ENCODE measurements at regions of chr4 and their contacts with region 1.

Region 1: GRCh38 chr4:61741327-61742096 is 541.4 kb downstream of the ADGRL3 start:
- DNase-seq: no peak

Region 2: DNA sequence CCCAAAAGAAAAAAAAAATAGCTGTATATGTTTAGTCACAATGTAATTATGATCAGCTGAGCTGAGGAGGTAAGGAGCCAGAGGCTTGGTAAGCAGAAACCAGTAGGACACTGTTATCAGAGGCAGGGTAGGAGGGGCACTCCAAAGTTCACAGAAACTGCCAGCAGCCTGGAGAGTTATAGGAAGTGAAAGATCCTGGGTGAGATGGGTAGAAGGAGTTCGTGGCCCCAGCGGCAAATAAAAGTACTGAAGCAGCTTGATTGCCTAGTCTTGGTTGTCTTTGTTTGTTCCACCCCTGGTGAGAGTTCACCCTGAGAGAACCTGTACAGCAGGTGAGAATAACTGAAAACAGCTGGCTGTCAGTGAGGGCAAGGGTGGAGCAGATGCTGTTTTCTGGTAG is 200.6 kb before region 1 on chr4:
- intact Hi-C with region 1: loop called (anchors 10 kb)
- DNase-seq: no peak